ENCODE measurements at regions of chr4 and their contacts with region 1.

Region 1: GRCh38 chr4:1809754-1810511 is 16.8 kb downstream of the FGFR3 start:
- DNase-seq: peak; percentile 83
- ATAC-seq: peak; percentile 95
- H3K4me3 Mint-ChIP-seq: no peak overlapping the region
- H3K27ac Mint-ChIP-seq: no peak overlapping the region
- H3K4me1 Mint-ChIP-seq: no peaks in the 10 kb centered on the region
- H3K27me3 Mint-ChIP-seq: no peaks in the 10 kb centered on the region
- CTCF ChIP-seq: peak; percentile 98

Region 2: GRCh38 chr4:1746265-1746691 is 63.7 kb before region 1 on chr4:
- CTCF ChIA-PET with region 1: interaction called, 139 read pairs
- POLR2A ChIA-PET with region 1: interaction called, 15 read pairs
- intact Hi-C with region 1: loop called (anchors 1 kb)
- DNase-seq: peak; percentile 92
- ATAC-seq: peak; percentile 78
- H3K4me3 Mint-ChIP-seq: no peak overlapping the region
- H3K27ac Mint-ChIP-seq: no peak overlapping the region
- H3K4me1 Mint-ChIP-seq: no peaks in the 10 kb centered on the region
- H3K27me3 Mint-ChIP-seq: peaks cover 4% of the 10 kb centered on the region
- CTCF ChIP-seq: peak; percentile 84

Region 3: DNA sequence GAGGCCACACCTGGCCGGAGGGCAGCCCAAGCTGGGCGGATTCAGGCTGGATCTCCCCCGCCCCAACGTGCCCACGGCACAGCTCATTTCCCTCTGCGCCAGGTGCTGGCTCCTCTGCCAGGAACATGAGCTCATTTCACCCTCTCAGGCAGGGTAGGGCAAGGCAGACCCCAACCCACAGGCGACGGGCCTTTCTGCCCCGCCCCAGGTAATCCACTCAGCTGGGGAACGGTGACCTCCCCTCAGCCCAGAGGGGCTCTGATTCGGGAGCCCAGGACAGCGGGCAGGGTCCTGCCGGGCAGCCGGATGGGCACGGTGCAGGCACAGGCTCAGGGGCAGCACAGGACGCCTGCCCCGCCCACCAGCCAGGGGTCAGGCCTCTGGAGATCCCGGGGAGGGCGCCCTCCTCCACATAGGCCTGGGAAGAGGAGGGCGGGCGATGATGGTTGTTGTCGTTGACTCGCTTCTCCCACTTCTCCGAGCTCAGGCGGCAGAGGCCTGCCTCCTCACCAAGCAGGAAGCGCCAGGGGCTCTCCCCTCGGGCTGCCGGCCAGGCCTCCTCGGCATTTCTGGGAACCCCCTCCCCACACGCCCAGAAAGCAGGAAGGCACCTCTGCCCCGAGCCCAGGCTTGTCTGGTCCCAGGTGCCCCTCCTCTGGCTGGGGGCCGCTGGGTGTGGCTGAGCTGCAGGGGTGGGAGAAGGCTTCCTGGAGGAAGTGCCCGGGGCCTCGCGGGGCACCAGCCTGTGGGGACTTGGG is 57.5 kb before region 1 on chr4:
- CTCF ChIA-PET with region 1: interaction called, 139 read pairs
- POLR2A ChIA-PET with region 1: interaction called, 15 read pairs
- intact Hi-C with region 1: loop called (anchors 1 kb)
- DNase-seq: peak; percentile 81
- ATAC-seq: peak; percentile 75
- H3K4me3 Mint-ChIP-seq: no peak overlapping the region
- H3K27ac Mint-ChIP-seq: peak overlapping the region; percentile 11
- H3K4me1 Mint-ChIP-seq: peaks cover 4% of the 10 kb centered on the region
- H3K27me3 Mint-ChIP-seq: peaks cover 4% of the 10 kb centered on the region
- CTCF ChIP-seq: no peak

Region 4: DNA sequence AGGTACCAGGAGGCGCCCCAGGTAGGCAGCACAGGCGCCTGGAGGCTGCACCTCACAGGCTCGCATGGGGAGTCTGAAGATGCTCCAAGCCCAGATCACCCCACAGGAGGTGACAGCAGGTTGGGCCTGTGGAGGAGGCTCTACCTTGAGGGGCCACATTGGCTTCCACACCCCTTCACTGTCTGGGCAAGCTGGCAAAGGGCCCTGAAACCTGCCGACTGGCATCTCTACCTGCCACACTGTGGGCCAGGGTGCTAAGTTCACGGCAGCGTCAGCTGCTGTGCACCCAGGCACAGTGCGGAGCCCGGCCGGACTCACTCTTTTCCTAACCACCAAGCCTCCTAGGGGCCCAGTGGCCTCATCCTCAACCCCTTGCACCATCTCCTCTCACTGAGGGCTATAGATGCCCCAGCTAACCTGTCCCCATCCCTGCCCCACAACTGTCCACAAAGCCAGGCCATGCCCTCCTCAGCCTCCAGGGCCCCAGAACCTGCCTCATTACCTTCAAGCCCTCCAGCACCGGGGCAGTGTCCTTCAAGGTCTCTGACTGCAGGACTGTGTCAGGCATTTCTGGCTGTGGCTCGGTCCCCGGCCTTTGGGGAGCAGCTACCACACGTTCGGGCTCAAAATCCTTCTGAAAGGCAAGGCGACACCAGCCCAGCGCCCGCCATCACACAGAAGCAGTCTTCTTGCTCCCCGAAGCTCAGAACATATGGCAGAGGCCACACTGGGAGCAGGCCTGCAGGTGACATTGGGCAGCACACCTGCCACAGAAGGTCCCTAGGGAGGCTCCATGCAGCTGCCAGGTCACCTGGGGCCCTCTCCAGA is 12.0 kb after region 1 on chr4:
- CTCF ChIA-PET with region 1: interaction called, 11 read pairs
- POLR2A ChIA-PET with region 1: interaction called, 3 read pairs
- intact Hi-C with region 1: no loop called
- DNase-seq: no peak
- ATAC-seq: no peak
- H3K4me3 Mint-ChIP-seq: no peak overlapping the region
- H3K27ac Mint-ChIP-seq: no peak overlapping the region
- H3K4me1 Mint-ChIP-seq: no peaks in the 10 kb centered on the region
- H3K27me3 Mint-ChIP-seq: no peaks in the 10 kb centered on the region
- CTCF ChIP-seq: no peak

Region 5: GRCh38 chr4:1834047-1834775 is 24.3 kb after region 1 on chr4:
- CTCF ChIA-PET with region 1: interaction called, 11 read pairs
- POLR2A ChIA-PET with region 1: no interaction called
- intact Hi-C with region 1: no loop called
- DNase-seq: no peak
- ATAC-seq: peak; percentile 24
- H3K4me3 Mint-ChIP-seq: no peak overlapping the region
- H3K27ac Mint-ChIP-seq: peak overlapping the region; percentile 10
- H3K4me1 Mint-ChIP-seq: peaks cover 5% of the 10 kb centered on the region
- H3K27me3 Mint-ChIP-seq: no peaks in the 10 kb centered on the region
- CTCF ChIP-seq: no peak

Measured in activated CD8-positive, alpha-beta T cell treated with anti-CD3 and anti-CD28 coated beads for 36 hours (primary cell).